ENCODE measurements at regions of chr2 and their contacts with region 1.

Region 1: DNA sequence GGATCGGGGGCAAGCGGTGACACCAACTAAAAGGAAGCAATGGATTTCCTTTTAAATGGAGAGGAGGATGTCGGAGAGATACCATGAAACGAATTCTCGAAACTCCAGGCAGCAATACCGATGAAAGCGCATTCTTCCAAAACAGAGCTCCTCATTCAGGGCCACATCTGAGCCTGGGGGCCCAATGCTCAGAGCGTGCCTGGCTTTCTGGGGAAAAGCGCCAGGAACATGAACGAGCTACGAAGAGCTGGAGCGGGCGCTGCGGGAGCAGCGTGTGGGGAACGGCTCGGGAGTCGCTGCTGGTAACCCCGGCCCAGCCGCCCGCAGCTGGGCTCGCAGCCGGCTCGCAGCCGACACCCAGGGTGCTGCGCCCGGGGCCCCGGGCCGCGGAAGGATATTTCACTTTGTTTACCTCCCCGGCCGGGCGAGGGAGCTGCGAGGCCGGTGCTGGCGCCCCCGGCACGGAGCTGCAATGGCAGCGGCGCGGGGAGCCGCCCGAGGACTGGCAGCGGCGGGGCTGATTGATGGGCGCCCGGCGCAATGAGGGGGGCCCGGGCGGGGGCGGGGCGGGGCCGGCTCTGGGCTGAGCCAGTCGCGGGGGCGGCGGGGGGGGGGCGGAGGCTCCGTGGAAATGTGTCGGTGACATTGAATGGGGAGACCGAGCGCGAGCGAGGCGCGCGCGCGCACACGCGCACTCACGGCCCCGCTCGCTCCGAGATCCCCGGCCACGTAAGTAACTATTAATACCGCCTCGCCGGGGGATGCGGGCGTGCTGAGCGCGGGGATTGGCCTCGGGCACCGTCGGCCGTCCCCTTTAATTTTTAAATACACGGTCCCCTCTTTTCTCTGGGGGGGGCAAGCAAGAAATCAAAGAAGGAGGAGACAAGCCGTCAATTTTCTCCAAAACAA is at the start of gene TRIB2:
- DNase-seq: peak; percentile 92
- H3K4me3 ChIP-seq: peak within 1 kb of the TSS; percentile 68 to 92 (median 78)
- H3K27ac ChIP-seq: peak within 1 kb of the TSS; percentile 91 to 95 (median 93)
- H3K4me1 ChIP-seq: peaks cover 0 to 50% (median 37%) of the 10 kb centered on the region in 4 donors
- H3K27me3 ChIP-seq: no peaks in the 10 kb centered on the region
- CTCF ChIP-seq: no peak
- EP300 ChIP-seq: peak in 1 of 4 donors; percentile 50
- POLR2A ChIP-seq: peak; percentile 38 to 51
- total RNA-seq, gene TRIB2: 34.2 to 56.2 (median 46.6) TPM

Region 2: DNA sequence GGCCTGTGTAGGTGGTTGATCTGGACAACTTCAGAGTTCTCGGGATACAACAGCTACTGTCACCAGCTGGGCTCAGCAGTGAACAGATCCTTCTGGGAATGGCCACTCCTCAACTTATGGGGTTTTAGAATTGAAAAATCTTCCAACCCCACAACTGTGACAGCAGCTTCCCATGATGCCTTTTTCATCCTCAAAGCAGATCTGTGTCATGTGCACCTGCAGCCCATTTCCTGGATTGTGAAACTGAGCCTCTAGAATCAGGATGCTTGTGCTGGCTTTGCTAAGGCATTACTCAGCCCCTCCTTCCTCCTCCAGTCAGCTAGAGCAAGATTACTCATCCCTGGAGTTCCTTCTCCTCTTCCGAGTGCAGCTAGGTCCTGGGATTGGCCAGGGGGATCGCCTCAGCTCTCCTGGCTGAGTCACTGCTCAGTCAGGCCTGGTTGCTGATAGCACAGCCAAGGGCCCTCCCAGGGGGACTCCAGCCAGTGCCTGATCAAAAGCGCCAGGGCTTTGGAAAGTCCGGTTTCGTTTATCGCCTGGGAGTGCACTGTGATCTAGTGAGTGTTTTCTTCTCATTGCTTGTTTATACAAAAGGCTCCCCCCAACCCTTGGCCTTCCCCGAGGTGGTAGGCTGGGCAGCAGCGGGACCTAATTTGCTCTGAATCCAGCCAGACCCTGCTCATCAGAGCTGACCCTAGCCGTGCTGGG is 972.5 kb before region 1 on chr2:
- intact Hi-C with region 1: loop called (anchors 10 kb)
- DNase-seq: peak; percentile 98
- H3K4me3 ChIP-seq: peak overlapping the region in 3 of 4 donors; percentile 15 to 30 (median 28)
- H3K27ac ChIP-seq: peak overlapping the region; percentile 80 to 93 (median 88)
- H3K4me1 ChIP-seq: peaks cover 0 to 49% (median 40%) of the 10 kb centered on the region in 4 donors
- H3K27me3 ChIP-seq: no peaks in the 10 kb centered on the region
- CTCF ChIP-seq: no peak
- EP300 ChIP-seq: peak in 1 of 4 donors; percentile 52
- POLR2A ChIP-seq: no peak

Region 3: GRCh38 chr2:11863513-11864328 is 852.8 kb before region 1 on chr2:
- intact Hi-C with region 1: loop called (anchors 1 kb)
- DNase-seq: peak; percentile 93
- H3K4me3 ChIP-seq: peak overlapping the region in 1 of 4 donors; percentile 15
- H3K27ac ChIP-seq: peak overlapping the region; percentile 7 to 55 (median 42)
- H3K4me1 ChIP-seq: peaks cover 0 to 15% (median 13%) of the 10 kb centered on the region in 4 donors
- H3K27me3 ChIP-seq: no peaks in the 10 kb centered on the region
- CTCF ChIP-seq: peak; percentile 92 to 97 (median 97)
- EP300 ChIP-seq: peak in 1 of 4 donors; percentile 8
- POLR2A ChIP-seq: no peak

Region 4: DNA sequence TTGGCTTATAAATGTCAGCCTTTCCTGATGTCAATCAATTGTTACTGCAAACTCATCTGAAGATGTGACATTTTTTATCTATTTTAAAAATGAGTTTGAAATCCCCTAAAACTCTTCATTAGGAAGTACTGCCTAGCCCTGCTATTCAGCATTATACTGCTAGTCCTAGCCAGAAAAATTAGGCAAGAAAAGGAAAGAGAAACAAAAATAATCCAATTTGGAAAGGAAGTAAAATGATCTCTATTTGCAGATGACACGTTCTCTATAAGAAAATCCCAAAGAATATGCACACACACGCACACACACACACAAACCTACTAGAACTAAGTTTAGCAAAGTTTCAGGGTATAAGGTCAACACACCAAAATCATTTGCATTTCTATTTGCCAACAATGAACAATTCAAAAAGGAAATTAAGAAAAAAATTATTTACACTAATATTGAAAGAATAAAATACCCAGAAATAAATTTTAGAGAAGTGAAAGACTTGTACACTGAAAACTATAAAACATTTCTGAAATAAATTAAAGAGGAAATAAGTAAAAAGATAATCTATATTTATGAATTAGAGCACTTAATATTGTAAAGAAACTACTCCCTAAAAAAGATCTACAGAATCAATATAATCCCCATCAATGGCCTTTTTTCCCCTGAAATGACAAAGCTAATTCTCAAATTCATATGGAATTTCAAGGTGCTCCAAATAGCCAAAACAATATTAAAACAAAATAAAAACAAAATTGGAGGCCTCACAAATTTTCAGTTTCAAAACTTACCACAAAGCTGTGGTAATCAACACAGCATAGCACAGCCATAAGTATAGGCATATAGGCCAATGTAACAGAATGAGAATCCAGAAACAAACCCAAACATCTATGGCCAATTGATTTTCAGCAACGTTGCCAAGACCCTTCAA is 433.5 kb before region 1 on chr2:
- intact Hi-C with region 1: loop called (anchors 10 kb)
- DNase-seq: no peak
- H3K4me3 ChIP-seq: no peak overlapping the region
- H3K27ac ChIP-seq: no peak overlapping the region
- H3K4me1 ChIP-seq: peaks cover 0 to 27% (median 18%) of the 10 kb centered on the region in 4 donors
- H3K27me3 ChIP-seq: no peaks in the 10 kb centered on the region
- CTCF ChIP-seq: no peak
- EP300 ChIP-seq: no peak
- POLR2A ChIP-seq: no peak

Region 5: DNA sequence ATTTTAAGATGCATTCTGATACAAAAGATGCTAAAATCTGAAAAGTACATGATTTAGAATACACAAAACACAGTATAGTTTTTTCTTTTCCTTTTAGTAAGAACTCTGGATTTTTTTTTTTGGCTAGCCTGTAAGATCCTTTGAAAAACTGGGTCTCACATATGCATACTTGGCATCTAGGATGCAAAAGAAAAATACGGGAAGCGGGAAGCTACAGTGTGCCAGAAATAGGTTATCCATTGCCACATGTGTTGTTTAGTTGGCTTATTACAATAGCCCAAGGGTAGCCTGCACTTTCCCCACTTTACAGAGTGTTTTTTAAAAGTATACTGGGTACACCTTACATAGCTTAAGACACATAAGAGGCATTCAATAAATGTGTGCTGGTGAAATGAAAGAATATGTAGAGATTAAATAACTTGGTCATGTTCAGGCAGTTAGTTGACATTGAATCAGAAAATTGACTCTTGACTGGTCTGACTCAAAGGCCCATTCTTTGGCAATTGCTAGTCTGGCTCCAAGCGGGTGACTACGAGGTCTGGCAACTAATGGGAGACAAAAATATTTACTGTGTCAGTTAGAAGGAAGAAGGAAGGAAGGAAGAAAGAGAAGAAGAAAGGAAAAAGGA is 286.6 kb before region 1 on chr2:
- intact Hi-C with region 1: loop called (anchors 5 kb)
- DNase-seq: no peak
- H3K4me3 ChIP-seq: no peak overlapping the region
- H3K27ac ChIP-seq: peak overlapping the region in 3 of 4 donors; percentile 63 to 77 (median 76)
- H3K4me1 ChIP-seq: peaks cover 3 to 49% (median 36%) of the 10 kb centered on the region in 4 donors
- H3K27me3 ChIP-seq: no peaks in the 10 kb centered on the region
- CTCF ChIP-seq: no peak
- EP300 ChIP-seq: no peak
- POLR2A ChIP-seq: no peak

Region 6: DNA sequence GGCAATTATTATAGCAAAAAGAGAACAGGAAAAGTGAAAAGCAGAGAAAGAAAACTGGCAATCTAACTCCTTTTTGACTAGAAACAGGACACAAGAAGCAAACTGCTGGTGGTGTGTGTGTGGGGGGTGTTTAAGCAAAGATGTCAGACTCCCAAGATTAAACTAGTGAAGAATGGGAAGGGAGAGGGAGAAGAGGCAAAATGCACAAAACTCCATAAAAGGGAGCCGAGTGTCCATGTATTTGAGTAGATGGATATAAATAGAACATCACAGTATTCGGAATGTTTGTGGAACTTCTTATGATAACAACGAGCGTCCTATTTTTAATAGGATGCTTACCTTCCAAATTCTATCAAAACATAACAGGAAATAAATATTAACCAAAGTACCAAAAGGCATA is 179.6 kb before region 1 on chr2:
- intact Hi-C with region 1: loop called (anchors 2 kb)
- DNase-seq: no peak
- H3K4me3 ChIP-seq: no peak overlapping the region
- H3K27ac ChIP-seq: peak overlapping the region in 3 of 4 donors; percentile 58 to 75 (median 73)
- H3K4me1 ChIP-seq: peaks cover 0 to 73% (median 54%) of the 10 kb centered on the region in 4 donors
- H3K27me3 ChIP-seq: no peaks in the 10 kb centered on the region
- CTCF ChIP-seq: no peak
- EP300 ChIP-seq: peak in 1 of 4 donors; percentile 3
- POLR2A ChIP-seq: no peak

Region 7: GRCh38 chr2:12931186-12931844 is 214.8 kb after region 1 on chr2:
- intact Hi-C with region 1: loop called (anchors 1 kb)
- DNase-seq: no peak
- H3K4me3 ChIP-seq: no peak overlapping the region
- H3K27ac ChIP-seq: peak overlapping the region in 1 of 4 donors; percentile 57
- H3K4me1 ChIP-seq: peaks cover 0 to 34% (median 27%) of the 10 kb centered on the region in 4 donors
- H3K27me3 ChIP-seq: no peaks in the 10 kb centered on the region
- CTCF ChIP-seq: peak; percentile 76 to 87 (median 82)
- EP300 ChIP-seq: no peak
- POLR2A ChIP-seq: no peak